Cardiac septum (tissue), 1 donor: ENCODE measurements at regions of chr1 and their contacts with region 1.

Region 1: GRCh38 chr1:225428068-225428880 is 436 bp upstream of the LBR start:
- DNase-seq: peak; percentile 98

Region 2: GRCh38 chr1:225454733-225455132 is 26.5 kb after region 1 on chr1:
- intact Hi-C with region 1: no loop called
- DNase-seq: no peak

Region 3: DNA sequence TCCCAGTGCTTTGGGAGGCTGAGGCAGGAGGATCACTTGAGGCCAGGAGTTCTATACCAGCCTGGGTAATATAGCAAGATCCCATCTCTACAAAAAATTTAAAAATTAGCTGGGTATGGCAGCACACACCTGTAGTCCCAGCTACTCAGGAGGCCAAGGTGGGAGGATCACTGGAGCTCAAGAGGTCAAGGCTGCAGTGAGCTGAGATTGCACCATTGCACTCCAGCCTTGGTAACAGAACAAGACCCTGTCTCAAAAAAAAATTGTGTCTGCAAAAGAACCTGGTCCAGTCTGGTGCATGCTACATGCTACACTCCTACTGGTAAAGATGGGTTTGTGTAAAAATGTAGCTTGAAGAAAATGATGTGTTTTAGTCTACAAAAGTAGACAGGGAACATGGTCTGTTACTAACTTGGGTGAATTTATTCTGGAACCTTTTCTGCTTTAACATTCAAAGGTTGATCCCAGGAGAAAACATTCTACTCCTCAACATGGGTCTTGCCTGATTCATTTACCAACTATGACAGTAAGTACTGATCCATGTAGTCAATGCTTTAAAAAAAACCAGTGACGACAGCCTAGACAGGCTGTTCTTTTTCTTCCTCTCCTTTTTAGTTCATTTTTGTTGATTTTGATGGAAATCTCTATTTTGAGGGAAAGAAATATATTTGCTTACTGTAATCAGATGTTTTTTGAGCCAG is 257.4 kb after region 1 on chr1:
- intact Hi-C with region 1: no loop called
- DNase-seq: no peak

Region 4: GRCh38 chr1:225923692-225924555 is 495.6 kb after region 1 on chr1 and contains the start of gene PYCR2:
- intact Hi-C with region 1: loop called (anchors 5 kb)
- DNase-seq: peak; percentile 97
- total RNA-seq, gene PYCR2: 68.6 TPM